Adrenal gland (tissue), 19 donors: ENCODE measurements at regions of chr16 and their contacts with region 1.

Region 1: DNA sequence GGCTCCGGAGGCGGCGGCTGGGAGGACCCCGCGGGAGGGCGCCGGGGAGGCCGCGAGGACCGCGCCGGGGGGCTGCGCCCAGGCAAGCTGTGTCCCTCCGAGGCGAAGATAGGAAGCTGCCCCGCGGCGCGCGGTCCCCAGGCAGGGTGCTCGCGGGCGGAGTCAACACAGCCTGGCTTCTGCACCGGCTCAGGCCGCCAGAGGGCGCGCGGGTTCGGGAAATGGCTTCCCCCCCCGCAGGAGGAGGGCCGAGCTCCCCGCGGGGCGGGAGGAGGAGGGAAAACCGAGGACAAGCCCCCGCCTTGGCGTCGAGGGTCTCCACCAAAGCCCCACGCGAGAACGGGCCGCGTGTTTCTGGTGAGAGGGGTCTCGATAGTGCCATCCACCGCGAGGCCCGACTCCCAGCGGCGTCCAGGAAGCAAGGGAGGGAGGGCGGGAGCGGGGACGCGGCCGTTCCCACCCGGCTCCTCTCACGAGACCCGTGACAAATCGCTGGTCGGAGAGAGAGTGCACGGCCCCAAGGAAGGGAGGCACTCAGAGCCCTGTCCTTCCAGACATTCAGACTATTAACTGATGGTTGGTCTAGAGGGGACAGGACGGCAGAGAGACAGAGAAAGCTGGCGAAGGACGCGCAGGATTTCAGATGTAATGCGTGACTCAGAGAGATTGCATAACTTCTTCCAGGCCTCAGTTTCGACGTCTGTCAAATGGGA is 64.4 kb upstream of the DNAJA2 start:
- DNase-seq: peak; percentile 84 to 93 (median 92)
- H3K4me3 ChIP-seq: peak overlapping the region; percentile 3 to 65 (median 40)
- H3K27ac ChIP-seq: peak overlapping the region in 2 of 5 donors; percentile 54 to 70
- H3K4me1 ChIP-seq: peaks cover 0 to 6% of the 10 kb centered on the region in 2 donors
- H3K27me3 ChIP-seq: no peaks in the 10 kb centered on the region
- CTCF ChIP-seq: peak; percentile 85 to 95 (median 93)
- POLR2A ChIP-seq: no peak

Region 2: DNA sequence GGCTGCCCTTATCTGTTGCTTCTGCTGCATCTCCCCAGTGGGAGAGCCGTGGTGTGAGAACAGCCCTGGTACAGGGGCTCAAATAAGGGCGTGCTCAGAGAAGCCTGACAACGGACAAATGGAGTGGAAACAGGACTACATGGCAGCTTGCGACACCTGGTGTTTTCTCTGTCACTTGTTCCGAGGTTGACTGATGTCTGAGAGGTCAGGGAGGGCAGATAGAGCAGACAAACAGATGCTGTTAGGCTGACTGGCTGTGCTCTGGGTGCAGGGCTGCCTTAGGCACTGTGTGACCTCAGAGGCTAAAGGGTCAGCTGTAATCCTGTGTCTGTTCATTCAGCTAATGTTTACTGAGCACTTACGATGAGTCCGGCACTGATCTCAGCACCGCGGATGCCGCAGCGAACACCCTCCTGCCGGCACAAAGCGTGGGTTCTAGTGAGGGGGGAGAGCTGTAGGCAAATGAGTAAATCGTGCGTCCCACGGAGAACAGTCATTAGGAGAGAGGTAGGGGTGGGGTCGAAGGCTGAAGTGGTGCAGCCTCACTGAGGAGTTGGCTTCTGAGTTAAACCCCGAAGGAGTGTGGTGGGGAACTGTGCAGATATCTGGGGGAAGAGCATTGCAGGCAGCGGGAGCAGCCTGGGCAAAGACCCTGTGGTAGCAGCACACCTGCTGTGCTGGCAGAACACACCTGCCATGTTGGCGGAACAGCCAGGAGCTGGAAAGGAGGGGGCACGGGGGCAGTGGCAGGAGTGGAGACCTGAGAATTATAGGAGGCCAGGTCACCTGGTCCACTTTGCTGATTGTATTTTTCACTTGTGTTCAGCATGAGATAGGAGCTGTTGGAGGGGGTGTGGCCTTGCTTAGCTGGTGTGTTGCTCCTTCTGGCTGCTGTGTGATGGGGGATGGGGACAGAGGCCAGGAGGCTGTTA is 118.8 kb before region 1 on chr16:
- intact Hi-C with region 1: no loop called
- DNase-seq: peak in 1 of 7 donors; percentile 58
- H3K4me3 ChIP-seq: no peak overlapping the region
- H3K27ac ChIP-seq: no peak overlapping the region
- H3K4me1 ChIP-seq: peaks cover 0 to 6% of the 10 kb centered on the region in 2 donors
- H3K27me3 ChIP-seq: no peaks in the 10 kb centered on the region
- CTCF ChIP-seq: no peak
- POLR2A ChIP-seq: no peak

Region 3: DNA sequence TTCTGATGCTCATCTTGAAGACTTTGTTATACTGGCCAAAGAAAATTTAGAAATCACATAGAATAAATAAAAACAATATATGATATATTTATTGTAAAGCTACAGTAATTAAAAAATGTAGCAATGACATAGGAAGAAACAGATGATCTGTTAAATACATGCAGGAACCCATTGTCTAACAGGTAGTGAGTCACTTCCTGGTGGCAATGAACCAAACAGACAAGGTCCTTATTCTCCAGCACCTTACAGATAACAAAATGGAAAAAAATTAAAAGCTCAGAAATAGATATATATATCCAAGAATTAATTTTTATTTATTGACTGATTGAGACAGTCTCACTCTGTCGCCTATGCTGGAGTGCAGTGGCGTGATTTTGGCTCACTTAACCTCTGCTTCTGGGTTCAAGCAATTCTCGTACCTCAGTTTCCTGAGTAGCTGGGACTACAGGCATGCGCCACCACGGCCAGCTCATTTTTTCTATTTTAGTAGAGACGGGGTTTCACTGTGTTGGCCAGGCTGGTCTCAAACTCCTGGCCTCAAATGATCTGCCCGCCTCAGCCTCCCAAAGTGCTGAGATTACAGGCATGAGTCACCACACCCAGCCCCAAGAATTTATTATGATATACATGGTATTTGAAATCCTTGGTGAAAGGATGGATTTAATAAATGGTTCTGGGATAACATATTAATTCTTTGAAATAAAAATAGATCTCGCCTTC is 98.4 kb after region 1 on chr16:
- intact Hi-C with region 1: loop called (anchors 5 to 10 kb)
- DNase-seq: peak in 2 of 7 donors; percentile 18 to 20
- H3K4me3 ChIP-seq: no peak overlapping the region
- H3K27ac ChIP-seq: no peak overlapping the region
- H3K4me1 ChIP-seq: peaks cover 0 to 12% of the 10 kb centered on the region in 2 donors
- H3K27me3 ChIP-seq: no peaks in the 10 kb centered on the region
- CTCF ChIP-seq: no peak
- POLR2A ChIP-seq: no peak

Region 4: GRCh38 chr16:48164907-48165726 is 1127.2 kb after region 1 on chr16:
- intact Hi-C with region 1: loop called (anchors 5 to 10 kb)
- DNase-seq: peak; percentile 62 to 82 (median 70)
- H3K4me3 ChIP-seq: no peak overlapping the region
- H3K27ac ChIP-seq: no peak overlapping the region
- H3K4me1 ChIP-seq: no peaks in the 10 kb centered on the region
- H3K27me3 ChIP-seq: no peaks in the 10 kb centered on the region
- CTCF ChIP-seq: peak; percentile 67 to 88 (median 80)
- POLR2A ChIP-seq: no peak